ENCODE measurements at regions of chr10 and their contacts with region 1.

Region 1: GRCh38 chr10:62816331-62817120 is at the start of gene EGR2:
- DNase-seq: peak; percentile 98
- H3K4me3 Mint-ChIP-seq: peak within 1 kb of the TSS; percentile 95
- H3K27ac Mint-ChIP-seq: peak within 1 kb of the TSS; percentile 98
- H3K4me1 Mint-ChIP-seq: peaks cover 41% of the 10 kb centered on the region
- H3K27me3 Mint-ChIP-seq: peaks cover 14% of the 10 kb centered on the region
- total RNA-seq, gene EGR2: 18.5 to 21.4 TPM

Region 2: GRCh38 chr10:62250594-62251198 is 565.8 kb before region 1 on chr10:
- CTCF ChIA-PET with region 1: no interaction called
- intact Hi-C with region 1: loop called (anchors 5 kb)
- DNase-seq: peak; percentile 8
- H3K4me3 Mint-ChIP-seq: no peak overlapping the region
- H3K27ac Mint-ChIP-seq: no peak overlapping the region
- H3K4me1 Mint-ChIP-seq: peaks cover 45% of the 10 kb centered on the region
- H3K27me3 Mint-ChIP-seq: no peaks in the 10 kb centered on the region

Region 3: GRCh38 chr10:62594093-62594520 is 222.4 kb before region 1 on chr10:
- CTCF ChIA-PET with region 1: interaction called, 16 read pairs
- intact Hi-C with region 1: loop called (anchors 1 kb)
- DNase-seq: peak; percentile 66
- H3K4me3 Mint-ChIP-seq: no peak overlapping the region
- H3K27ac Mint-ChIP-seq: no peak overlapping the region
- H3K4me1 Mint-ChIP-seq: peaks cover 2% of the 10 kb centered on the region
- H3K27me3 Mint-ChIP-seq: peaks cover 7% of the 10 kb centered on the region

Region 4: DNA sequence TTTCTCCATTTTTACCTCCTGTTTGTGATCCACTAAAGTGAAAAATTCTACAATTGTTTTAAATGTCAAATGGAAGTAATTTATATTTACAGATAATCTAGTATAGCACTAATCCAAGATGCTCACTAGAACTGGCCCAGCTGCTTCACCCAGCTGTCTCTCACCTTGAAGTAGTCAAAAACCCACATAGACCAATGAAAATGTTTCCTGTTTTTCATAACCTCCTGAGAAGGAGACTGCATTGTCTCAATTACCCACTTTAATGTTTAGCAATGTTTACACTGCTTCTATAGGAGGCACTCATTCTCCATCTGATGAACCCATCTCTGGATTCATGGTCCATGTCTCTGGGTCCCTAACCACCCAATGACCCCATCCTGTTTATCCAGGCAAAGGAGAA is 68.1 kb before region 1 on chr10:
- CTCF ChIA-PET with region 1: interaction called, 14 read pairs
- intact Hi-C with region 1: loop called (anchors 1 kb)
- DNase-seq: no peak
- H3K4me3 Mint-ChIP-seq: no peak overlapping the region
- H3K27ac Mint-ChIP-seq: no peak overlapping the region
- H3K4me1 Mint-ChIP-seq: peaks cover 26% of the 10 kb centered on the region
- H3K27me3 Mint-ChIP-seq: no peaks in the 10 kb centered on the region

Region 5: GRCh38 chr10:62862447-62862846 is 45.9 kb after region 1 on chr10:
- CTCF ChIA-PET with region 1: no interaction called
- intact Hi-C with region 1: no loop called
- DNase-seq: no peak
- H3K4me3 Mint-ChIP-seq: no peak overlapping the region
- H3K27ac Mint-ChIP-seq: no peak overlapping the region
- H3K4me1 Mint-ChIP-seq: peaks cover 8% of the 10 kb centered on the region
- H3K27me3 Mint-ChIP-seq: peaks cover 5% of the 10 kb centered on the region

Region 6: DNA sequence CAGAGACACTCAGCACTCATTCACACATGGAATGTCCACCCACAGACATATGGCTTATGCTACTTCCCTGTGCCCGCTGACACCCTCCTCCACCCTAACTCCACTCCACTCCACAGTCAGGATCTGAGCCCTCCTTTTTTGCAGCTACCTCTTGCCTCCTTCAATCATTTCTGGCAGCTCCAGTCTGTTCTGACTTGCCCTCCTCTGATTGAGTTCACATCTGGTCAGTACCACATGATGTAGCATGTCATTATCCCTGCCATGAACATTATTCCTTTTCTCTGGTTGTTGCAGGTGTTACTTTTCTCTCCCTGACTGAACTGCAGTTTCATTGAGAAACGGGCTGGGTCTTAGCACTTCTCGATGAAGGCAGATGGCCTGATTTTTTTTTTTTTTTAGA is 129.8 kb after region 1 on chr10:
- CTCF ChIA-PET with region 1: no interaction called
- intact Hi-C with region 1: no loop called
- DNase-seq: no peak
- H3K4me3 Mint-ChIP-seq: no peak overlapping the region
- H3K27ac Mint-ChIP-seq: no peak overlapping the region
- H3K4me1 Mint-ChIP-seq: no peaks in the 10 kb centered on the region
- H3K27me3 Mint-ChIP-seq: peaks cover 3% of the 10 kb centered on the region

Region 7: GRCh38 chr10:63083904-63084689 is 267.6 kb after region 1 on chr10:
- CTCF ChIA-PET with region 1: interaction called, 3 read pairs
- intact Hi-C with region 1: loop called (anchors 1 kb)
- DNase-seq: peak; percentile 52
- H3K4me3 Mint-ChIP-seq: no peak overlapping the region
- H3K27ac Mint-ChIP-seq: no peak overlapping the region
- H3K4me1 Mint-ChIP-seq: no peaks in the 10 kb centered on the region
- H3K27me3 Mint-ChIP-seq: peaks cover 4% of the 10 kb centered on the region

Region 8: DNA sequence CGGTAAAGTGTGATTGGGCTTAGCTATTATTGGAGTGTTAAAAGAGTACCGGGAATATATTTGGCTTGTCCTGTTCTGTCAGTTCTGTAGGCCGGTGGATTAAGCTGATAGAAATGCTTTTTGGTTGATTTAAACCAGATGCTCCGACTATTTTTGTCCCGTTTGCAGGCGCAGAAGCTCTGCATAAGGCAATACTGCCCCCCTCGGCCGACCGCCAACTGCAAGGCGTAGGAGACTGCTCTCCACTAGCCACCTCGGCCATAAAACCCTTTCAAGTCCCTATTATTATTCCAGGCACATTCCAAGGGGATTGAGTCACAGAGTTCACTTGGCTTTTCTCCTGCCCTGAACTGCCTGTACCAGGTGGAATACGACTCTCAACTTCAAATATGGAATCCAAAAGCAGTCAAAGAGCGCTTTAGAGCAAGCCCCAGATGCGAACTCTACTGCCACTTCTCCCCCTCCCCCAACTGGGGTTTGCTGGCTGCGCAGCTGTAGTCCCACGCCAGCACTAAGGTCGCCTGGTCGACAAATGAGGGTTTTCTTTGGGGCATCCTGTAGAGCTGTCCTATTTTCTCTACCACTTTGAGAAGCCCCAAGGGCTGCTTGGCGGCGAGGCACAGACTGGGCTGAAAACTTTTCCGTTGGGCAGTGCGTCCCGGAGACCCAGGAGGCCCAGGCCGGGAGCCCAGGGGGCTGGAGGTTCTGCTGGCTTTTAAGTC is 813.0 kb after region 1 on chr10:
- CTCF ChIA-PET with region 1: no interaction called
- intact Hi-C with region 1: loop called (anchors 1 kb)
- DNase-seq: peak; percentile 89
- H3K4me3 Mint-ChIP-seq: peak overlapping the region; percentile 82
- H3K27ac Mint-ChIP-seq: peak overlapping the region; percentile 69
- H3K4me1 Mint-ChIP-seq: peaks cover 17% of the 10 kb centered on the region
- H3K27me3 Mint-ChIP-seq: no peaks in the 10 kb centered on the region